Activated naive CD4-positive, alpha-beta T cell treated with anti-CD3 and anti-CD28 coated beads, Interleukin-2, amount 10 ng/mL, durations not matched to agents 7 days and 5 days (primary cell): ENCODE measurements at regions of chr7 and their contacts with region 1.

Region 1: DNA sequence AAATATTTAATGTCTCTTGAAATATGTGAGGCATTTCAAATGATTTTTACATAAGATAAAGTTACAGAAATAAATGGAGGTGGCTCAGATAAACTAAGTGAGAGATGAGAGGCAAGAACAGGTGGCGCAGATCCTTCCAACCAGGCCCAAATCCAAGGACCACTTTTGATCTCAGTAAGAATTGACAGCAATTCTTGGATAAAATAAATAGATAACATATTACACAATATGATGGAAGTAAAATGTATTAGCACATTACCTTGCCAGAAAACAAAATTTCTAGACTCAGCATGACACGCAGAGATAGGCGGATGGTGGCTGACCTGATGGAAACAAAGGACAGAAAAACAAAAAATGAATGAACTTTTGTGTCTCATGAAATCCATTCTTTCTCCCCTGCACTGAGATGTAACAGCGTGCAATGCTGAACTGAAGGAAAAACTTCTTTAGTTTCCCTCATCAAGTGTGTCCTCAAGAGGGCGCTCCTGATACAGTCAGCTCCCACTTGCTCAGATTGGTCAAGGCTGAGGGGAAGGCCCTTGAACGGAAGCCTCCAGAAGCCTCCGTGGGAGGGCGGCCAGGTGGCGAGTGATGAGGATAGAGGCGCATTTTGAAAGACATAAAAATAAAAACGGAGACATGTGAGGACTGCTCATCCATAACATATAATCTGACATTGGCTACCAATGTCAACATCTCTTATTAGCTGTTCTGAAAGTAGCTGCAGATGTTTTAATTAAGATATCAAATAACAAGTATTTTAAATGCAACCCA is 62.8 kb upstream of the GSDME start:
- DNase-seq: peak; percentile 83
- H3K4me3 Mint-ChIP-seq: peak overlapping the region; percentile 60
- H3K27ac Mint-ChIP-seq: peak overlapping the region; percentile 98
- H3K4me1 Mint-ChIP-seq: peaks cover 58% of the 10 kb centered on the region
- H3K27me3 Mint-ChIP-seq: no peaks in the 10 kb centered on the region

Region 2: GRCh38 chr7:24979863-24980533 is 159.9 kb after region 1 on chr7 and contains the start of gene OSBPL3:
- CTCF ChIA-PET with region 1: interaction called, 82 read pairs
- DNase-seq: peak; percentile 97
- H3K4me3 Mint-ChIP-seq: peak within 1 kb of the TSS; percentile 85
- H3K27ac Mint-ChIP-seq: peak within 1 kb of the TSS; percentile 92
- H3K4me1 Mint-ChIP-seq: peaks cover 62% of the 10 kb centered on the region
- H3K27me3 Mint-ChIP-seq: peaks cover 19% of the 10 kb centered on the region

Region 3: GRCh38 chr7:25069900-25070443 is 249.9 kb after region 1 on chr7:
- CTCF ChIA-PET with region 1: interaction called, 16 read pairs
- DNase-seq: peak; percentile 65
- H3K4me3 Mint-ChIP-seq: no peak overlapping the region
- H3K27ac Mint-ChIP-seq: no peak overlapping the region
- H3K4me1 Mint-ChIP-seq: peaks cover 11% of the 10 kb centered on the region
- H3K27me3 Mint-ChIP-seq: peaks cover 13% of the 10 kb centered on the region

Region 4: GRCh38 chr7:25098096-25099046 is 278.3 kb after region 1 on chr7:
- CTCF ChIA-PET with region 1: interaction called, 18 read pairs
- DNase-seq: peak; percentile 73
- H3K4me3 Mint-ChIP-seq: no peak overlapping the region
- H3K27ac Mint-ChIP-seq: no peak overlapping the region
- H3K4me1 Mint-ChIP-seq: peaks cover 5% of the 10 kb centered on the region
- H3K27me3 Mint-ChIP-seq: peaks cover 12% of the 10 kb centered on the region